ENCODE measurements at regions of chr17 and their contacts with region 1.

Region 1: DNA sequence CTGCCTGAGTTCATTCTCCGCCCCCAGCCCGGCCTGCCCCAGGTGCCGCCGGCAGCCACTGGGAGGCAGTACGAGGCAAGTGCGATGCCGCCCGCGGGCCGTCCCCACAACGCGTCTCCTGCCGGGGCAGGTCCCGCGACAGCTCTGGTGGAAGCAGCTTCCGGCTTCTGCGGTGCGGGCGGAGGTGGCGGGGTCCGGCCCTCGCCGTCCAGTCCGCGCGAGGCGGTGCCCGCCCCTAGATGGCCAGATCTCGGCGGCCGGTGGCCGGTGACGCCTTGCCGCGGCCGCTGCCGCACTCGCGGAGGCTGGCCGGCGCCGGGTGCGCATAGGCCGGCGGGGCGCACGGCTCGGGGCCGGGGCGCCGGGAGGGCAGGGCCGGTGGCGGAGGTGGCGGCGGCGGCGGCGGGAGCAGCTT is 1.8 kb downstream of the GJD3 start:
- DNase-seq: no peak
- H3K4me3 ChIP-seq: peak overlapping the region; percentile 43
- H3K27me3 ChIP-seq: no peaks in the 10 kb centered on the region
- CTCF ChIP-seq: peak; percentile 85

Region 2: DNA sequence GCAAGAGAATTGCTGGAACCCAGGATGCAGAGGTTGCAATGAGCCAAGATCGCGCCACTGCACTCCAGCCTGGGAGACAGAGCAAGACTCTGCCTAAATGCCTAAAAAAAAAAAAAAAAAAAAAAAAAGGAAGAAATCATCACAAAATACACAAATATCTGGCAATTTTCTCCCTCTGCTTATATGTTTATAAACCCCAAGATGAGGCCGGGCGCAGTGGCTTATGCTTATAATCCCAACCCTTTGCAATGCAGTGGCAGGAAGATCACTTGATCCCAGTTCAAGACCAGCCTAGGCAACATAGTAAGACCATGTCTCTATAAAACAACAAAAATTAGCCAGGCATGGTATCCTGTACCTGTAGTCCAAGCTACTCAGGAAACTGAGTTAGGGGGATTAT is 933.1 kb before region 1 on chr17:
- CTCF ChIA-PET with region 1: no interaction called
- POLR2A ChIA-PET with region 1: no interaction called
- DNase-seq: no peak
- H3K4me3 ChIP-seq: no peak overlapping the region
- H3K27me3 ChIP-seq: no peaks in the 10 kb centered on the region
- CTCF ChIP-seq: no peak

Region 3: GRCh38 chr17:40317880-40318829 is 44.5 kb before region 1 on chr17:
- CTCF ChIA-PET with region 1: interaction called, 762 read pairs
- POLR2A ChIA-PET with region 1: no interaction called
- DNase-seq: peak; percentile 80
- H3K4me3 ChIP-seq: peak overlapping the region; percentile 83
- H3K27me3 ChIP-seq: no peaks in the 10 kb centered on the region
- CTCF ChIP-seq: no peak

Region 4: DNA sequence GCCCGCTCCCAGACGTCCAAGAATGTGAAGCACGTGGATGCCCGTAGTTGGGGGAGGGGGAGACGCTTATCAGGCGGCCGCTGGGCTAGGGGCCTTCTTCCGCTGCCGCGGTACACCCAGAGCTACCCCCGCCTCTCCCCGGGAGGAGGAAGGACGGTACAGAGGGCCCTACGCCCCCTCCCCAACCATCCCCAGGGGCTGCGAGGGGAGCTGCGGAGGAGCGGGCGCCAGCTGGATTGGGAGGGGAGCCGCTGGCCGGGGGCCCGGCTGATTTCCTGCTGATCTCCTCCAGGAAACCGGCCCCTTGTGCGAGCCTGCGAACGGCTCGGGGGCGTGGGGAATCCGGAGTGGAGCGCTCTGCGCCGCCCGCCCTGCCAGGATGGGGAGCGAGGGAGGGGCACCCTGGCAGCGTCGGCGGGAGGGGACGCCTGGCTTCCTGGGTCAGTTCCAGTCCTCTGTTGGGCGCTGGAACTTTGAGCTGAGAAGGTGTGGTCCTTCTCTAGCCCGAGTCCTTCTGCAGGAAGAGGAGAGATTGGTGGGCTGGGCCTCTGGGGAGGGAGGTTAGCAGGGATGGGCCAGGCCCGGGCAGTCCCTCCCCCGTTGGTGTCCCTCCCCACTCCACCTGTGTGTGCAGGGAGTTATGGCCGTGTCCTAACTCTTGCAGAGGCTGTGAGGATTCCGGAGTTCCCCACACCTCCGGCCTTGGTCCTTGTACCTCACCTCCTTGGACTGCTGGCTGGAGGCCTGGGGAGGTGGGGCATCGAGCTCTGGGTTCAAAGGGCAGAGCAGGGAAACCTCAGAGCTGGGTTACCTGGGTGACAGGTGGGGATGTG is 17.3 kb before region 1 on chr17:
- CTCF ChIA-PET with region 1: interaction called, 18 read pairs
- POLR2A ChIA-PET with region 1: no interaction called
- DNase-seq: no peak
- H3K4me3 ChIP-seq: peak overlapping the region; percentile 84
- H3K27me3 ChIP-seq: no peaks in the 10 kb centered on the region
- CTCF ChIP-seq: no peak

Region 5: GRCh38 chr17:40382251-40382650 is 19.5 kb after region 1 on chr17:
- CTCF ChIA-PET with region 1: interaction called, 10 read pairs
- POLR2A ChIA-PET with region 1: no interaction called
- DNase-seq: no peak
- H3K4me3 ChIP-seq: no peak overlapping the region
- H3K27me3 ChIP-seq: no peaks in the 10 kb centered on the region
- CTCF ChIP-seq: no peak

Region 6: GRCh38 chr17:40417609-40418427 is 55.1 kb after region 1 on chr17 and contains the start of gene TOP2A:
- CTCF ChIA-PET with region 1: interaction called, 18 read pairs
- POLR2A ChIA-PET with region 1: no interaction called
- DNase-seq: peak; percentile 99
- H3K4me3 ChIP-seq: peak within 1 kb of the TSS; percentile 56
- H3K27me3 ChIP-seq: no peaks in the 10 kb centered on the region
- CTCF ChIP-seq: no peak
- polyA plus RNA-seq, gene TOP2A: 31.8 and 69.6 TPM in 2 replicates

Region 7: GRCh38 chr17:40536295-40537171 is 173.8 kb after region 1 on chr17:
- CTCF ChIA-PET with region 1: interaction called, 69 read pairs
- POLR2A ChIA-PET with region 1: no interaction called
- DNase-seq: no peak
- H3K4me3 ChIP-seq: no peak overlapping the region
- H3K27me3 ChIP-seq: no peaks in the 10 kb centered on the region
- CTCF ChIP-seq: no peak

Region 8: DNA sequence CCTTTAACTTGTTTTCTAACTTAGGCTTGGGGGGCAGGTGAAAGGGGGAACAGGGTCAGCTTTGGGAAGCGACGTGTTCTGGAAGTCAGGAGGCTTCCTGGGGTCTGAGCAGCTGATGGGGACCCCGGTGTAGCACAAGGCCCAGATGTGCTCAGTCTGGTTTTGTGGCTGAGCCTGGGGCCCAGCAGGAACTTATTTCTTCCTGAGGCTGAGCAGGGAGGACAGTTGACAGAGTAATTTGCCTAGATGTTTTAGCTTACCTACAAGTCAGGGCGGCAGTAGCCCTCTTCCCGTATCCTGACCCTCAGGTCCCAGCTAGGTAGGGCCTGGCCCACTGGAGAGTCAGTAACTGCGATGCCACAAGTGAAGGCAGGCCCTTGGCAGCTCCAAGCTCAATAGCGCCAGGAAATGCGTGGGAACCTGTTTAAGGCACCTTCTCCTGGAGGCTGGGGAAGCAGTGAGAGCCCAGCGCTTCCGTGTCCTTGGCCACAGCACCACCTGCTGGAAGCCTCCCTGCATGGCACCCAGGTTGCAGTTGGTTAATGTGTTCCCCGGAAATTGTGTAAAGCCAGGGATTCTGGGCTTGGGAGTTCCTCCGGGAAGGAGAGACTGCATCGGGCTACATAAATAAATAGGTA is 197.4 kb after region 1 on chr17:
- CTCF ChIA-PET with region 1: interaction called, 62 read pairs
- POLR2A ChIA-PET with region 1: no interaction called
- DNase-seq: peak; percentile 62
- H3K4me3 ChIP-seq: no peak overlapping the region
- H3K27me3 ChIP-seq: peaks cover 3% of the 10 kb centered on the region
- CTCF ChIP-seq: peak; percentile 99

Measured in BJ (cell line).